AG04450 (cell line): ENCODE measurements at regions of chr7 and their contacts with region 1.

Region 1: DNA sequence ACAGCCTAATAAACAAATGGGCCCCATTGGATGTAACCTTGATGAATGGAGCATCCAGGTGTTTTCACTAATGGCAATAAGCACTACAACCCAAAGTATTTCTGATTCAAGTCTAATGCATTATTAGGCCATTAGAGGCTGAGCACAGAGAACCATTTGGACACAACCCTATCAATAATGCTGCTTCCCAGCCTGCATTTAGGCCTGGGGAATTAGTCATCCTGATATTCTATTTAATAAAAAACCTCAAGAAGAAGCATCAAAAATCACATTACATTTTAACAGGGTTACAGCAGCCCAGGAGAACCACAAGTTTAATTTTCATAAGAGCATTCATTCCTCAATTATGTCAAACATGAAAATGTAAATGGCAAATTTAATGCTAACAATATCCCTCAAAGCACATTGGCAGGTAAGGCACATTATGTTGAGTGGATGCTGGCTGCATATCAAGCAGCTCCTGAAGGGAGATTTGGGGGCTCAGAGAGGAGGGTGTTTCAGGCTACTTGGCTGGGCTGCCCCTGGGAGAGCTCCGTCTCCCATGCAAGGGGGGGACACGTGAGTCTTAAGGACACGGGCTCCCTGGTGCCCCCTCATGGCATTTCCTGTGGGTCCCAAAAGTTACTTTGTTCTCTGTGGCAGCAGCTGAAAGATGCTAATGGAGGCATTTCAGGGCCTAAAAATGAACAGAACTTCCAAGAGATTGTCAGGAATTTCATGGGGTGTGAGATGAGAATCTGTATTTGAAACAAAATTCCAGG is 143.4 kb downstream of the HERPUD2 start:
- DNase-seq: no peak
- H3K4me3 ChIP-seq: no peak overlapping the region
- H3K27ac ChIP-seq: no peak overlapping the region
- H3K27me3 ChIP-seq: peaks cover 2% of the 10 kb centered on the region
- CTCF ChIP-seq: no peak

Region 2: DNA sequence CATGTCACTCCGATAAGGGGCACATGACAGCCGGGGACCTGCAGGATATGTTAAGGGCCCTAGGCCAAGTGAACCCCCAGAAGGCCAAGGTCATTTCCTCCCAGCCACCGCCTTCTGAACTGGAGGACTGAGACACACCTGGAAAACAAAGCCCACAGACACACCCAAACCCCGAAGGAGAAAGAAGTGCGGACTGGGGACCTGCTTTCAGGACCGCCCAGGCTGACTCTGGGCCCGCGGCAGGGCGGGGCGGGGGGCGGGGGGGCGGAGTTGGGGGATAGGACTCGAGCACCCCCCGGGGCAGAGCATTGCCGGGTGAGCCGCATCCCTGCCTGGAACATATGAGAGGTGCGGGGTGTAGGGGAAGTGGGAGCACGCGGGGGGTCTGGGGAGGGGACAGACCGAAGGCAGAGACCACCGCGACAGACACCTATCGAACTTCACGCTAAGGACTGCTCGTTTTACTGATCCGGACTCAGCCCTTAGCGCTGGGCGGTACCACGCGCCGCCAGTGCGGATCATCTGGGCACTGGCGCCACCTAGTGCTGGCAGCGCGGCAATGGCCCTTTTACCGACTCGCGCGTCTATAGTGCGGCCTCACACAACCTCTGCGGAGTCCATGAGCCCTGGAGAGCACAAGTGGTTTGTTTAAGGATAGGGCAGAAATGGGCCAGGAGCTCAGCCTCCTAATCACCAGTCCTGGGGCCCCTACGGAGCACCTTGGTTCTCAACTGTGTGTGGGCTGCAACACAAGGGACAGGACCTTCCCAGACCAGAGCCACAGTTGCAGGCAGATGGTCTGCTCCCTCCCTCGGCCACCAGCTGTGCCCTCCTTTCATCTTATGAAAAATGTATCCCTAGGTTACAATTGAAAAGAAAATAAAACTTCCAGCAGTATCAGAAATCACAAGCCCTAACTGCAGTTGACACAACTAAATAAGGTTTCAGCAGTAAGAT is 14.2 kb before region 1 on chr7:
- CTCF ChIA-PET with region 1: interaction called, 10 read pairs
- POLR2A ChIA-PET with region 1: no interaction called
- DNase-seq: peak; percentile 18
- H3K4me3 ChIP-seq: peak overlapping the region; percentile 50
- H3K27ac ChIP-seq: no peak overlapping the region
- H3K27me3 ChIP-seq: peaks cover 9% of the 10 kb centered on the region
- CTCF ChIP-seq: peak; percentile 94

Region 3: DNA sequence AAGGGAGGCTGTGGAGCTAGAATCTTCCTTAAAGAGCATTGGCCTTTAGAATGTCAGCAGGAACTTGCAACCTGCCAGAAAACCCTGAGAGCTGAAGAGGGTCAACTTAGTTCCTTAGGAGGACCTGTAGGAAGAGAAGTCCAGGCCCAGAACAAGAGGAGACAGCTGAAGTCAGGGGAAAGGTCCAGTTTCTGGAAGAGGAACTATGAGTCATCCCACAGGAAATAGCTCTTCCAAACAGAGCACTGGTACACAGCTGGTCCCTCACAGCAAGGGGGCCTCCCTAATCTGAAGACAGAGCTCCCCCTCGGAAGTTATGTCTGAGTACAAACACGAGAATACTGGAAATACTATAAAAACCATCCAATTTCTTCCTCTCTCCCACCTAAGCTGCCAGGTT is 44.6 kb after region 1 on chr7:
- CTCF ChIA-PET with region 1: no interaction called
- POLR2A ChIA-PET with region 1: no interaction called
- DNase-seq: peak; percentile 23
- H3K4me3 ChIP-seq: no peak overlapping the region
- H3K27ac ChIP-seq: no peak overlapping the region
- H3K27me3 ChIP-seq: no peaks in the 10 kb centered on the region
- CTCF ChIP-seq: 0 out of 2 replicates have a peak, but pooled peaks have one; percentile 8